ENCODE measurements at regions of chr1 and their contacts with region 1.

Region 1: DNA sequence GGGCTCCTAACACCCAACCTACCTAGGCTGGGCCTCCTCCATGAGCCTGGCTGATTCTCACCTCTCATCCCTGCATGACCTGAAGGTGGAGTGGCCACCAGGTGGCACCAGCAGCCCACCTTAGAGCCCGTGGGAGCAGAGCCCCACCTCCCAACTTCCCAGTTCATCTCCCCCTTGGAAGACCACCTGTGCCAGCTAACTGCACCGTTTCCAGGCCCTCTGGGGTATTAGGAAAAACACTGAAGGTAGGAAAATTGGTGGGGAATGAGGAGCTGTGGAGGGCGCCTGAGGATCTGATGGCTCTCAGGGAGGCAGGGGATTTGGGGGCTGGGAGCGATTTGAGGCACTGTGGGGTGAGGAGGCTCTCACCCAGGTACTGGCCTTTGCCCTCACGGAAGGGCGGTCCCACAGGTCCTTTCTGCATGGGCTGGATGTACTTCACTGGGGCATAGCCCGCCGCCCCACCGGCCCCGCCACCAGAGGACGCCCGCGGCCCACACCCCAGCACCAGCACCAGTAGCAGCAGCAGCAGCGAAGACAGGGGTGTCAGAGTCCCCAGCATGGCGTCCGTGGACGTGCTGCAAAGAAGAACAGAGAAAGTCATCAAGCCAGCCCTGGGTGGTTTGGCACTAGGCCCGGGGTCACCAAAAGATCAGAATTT is 11.1 kb downstream of the ADPRS start:
- DNase-seq: peak; percentile 25 to 64
- ATAC-seq: peak; percentile 83 to 93
- H3K4me3 ChIP-seq: no peak overlapping the region
- H3K27ac ChIP-seq: no peak overlapping the region
- H3K4me1 ChIP-seq: no peaks in the 10 kb centered on the region
- H3K27me3 ChIP-seq: no peaks in the 10 kb centered on the region
- CTCF ChIP-seq: peak; percentile 64 to 90 (median 86)
- POLR2A ChIP-seq: no peak

Region 2: DNA sequence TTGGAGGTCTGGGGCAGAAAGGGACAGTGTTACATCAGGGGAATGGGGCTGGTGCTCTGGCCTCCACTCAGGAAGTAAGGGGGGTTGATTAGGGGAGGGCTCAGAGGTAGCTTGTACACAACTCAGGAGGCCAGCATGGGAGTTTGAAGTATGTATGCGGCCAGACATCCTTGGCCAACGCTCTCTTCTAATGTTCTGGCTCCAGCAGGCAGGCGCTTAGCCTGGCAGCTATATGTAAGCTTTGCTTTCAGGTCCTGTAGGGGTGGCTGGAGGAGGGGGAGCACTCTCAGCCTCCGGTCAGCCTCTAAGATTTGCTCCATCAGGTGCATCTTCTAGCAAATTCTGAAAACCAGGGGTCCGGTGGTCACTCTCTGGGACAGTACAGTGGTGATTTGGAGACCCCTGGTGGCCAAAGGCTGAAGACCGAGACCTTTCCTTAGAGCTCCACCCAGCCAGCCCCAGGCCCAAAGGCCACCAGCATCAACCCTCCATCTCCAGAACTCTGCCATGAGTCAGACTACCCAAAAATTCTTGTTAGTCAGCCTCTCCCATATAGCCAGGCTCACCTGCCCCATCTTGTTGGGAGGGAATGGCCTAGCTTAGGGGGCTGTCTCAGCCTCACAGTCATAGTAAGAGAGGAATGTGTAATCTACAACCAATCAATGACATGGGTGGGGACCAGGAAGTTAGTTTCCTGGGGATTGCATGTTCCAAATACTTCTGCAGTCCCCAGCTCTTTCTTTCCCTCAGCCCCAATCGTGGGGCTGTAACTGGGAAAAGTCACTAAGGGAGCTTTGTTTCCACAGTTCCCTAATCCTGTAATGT is 34.9 kb after region 1 on chr1:
- in situ Hi-C with region 1: no loop called
- intact Hi-C with region 1: loop called (anchors 2 kb)
- DNase-seq: no peak
- ATAC-seq: peak; percentile 25 to 35
- H3K4me3 ChIP-seq: no peak overlapping the region
- H3K27ac ChIP-seq: no peak overlapping the region
- H3K4me1 ChIP-seq: peaks cover 17 to 37% of the 10 kb centered on the region in 2 donors
- H3K27me3 ChIP-seq: no peaks in the 10 kb centered on the region
- CTCF ChIP-seq: peak; percentile 40 to 64 (median 56)
- POLR2A ChIP-seq: no peak

Region 3: GRCh38 chr1:36187800-36188593 is 88.2 kb after region 1 on chr1:
- in situ Hi-C with region 1: loop called in 1 of 4 experiments (anchors 10 kb)
- intact Hi-C with region 1: loop called (anchors 2 kb)
- DNase-seq: peak; percentile 90 to 94
- ATAC-seq: peak; percentile 93 to 95
- H3K4me3 ChIP-seq: no peak overlapping the region
- H3K27ac ChIP-seq: peak overlapping the region; percentile 86 to 92 (median 87)
- H3K4me1 ChIP-seq: peaks cover 16 to 17% of the 10 kb centered on the region in 2 donors
- H3K27me3 ChIP-seq: no peaks in the 10 kb centered on the region
- CTCF ChIP-seq: peak; percentile 88 to 95 (median 92)
- POLR2A ChIP-seq: no peak

Region 4: GRCh38 chr1:36411674-36412520 is 312.1 kb after region 1 on chr1:
- in situ Hi-C with region 1: loop called in 2 of 4 experiments (anchors 10 kb)
- intact Hi-C with region 1: no loop called
- DNase-seq: no peak
- ATAC-seq: peak; percentile 42 to 64
- H3K4me3 ChIP-seq: no peak overlapping the region
- H3K27ac ChIP-seq: no peak overlapping the region
- H3K4me1 ChIP-seq: no peaks in the 10 kb centered on the region
- H3K27me3 ChIP-seq: no peaks in the 10 kb centered on the region
- CTCF ChIP-seq: no peak
- POLR2A ChIP-seq: no peak

Measured in gastrocnemius medialis (tissue), 4 donors.